Endothelial cell of umbilical vein (primary cell): ENCODE measurements at regions of chr9 and their contacts with region 1.

Region 1: DNA sequence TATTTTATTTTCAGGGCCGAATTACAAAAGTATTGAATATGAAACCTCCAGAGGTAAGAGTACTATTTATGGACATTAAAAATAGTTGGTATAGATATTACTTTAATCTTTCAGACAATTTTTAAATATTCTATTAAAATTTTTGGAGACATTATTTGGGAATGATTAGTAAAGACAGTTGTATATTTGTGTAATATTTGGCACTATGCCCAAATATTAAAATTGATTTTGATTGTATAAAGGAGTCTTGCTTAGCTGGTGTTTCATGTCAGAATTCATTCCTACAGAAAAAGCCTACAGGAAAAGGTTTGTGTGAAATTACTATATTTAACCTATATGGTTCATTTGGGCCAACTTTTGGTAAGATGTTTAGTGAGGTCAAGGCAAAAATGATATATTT is 5.5 kb downstream of the SMC2 start:
- DNase-seq: no peak
- H3K4me3 ChIP-seq: no peak overlapping the region
- H3K27ac ChIP-seq: no peak overlapping the region
- H3K4me1 ChIP-seq: peaks cover 7% of the 10 kb centered on the region
- H3K27me3 ChIP-seq: no peaks in the 10 kb centered on the region
- CTCF ChIP-seq: no peak
- POLR2A ChIP-seq: no peak

Region 2: GRCh38 chr9:104118916-104119315 is 19.3 kb after region 1 on chr9:
- CTCF ChIA-PET with region 1: interaction called, 15 read pairs
- POLR2A ChIA-PET with region 1: no interaction called
- dilution Hi-C with region 1: no loop called
- intact Hi-C with region 1: no loop called
- DNase-seq: no peak
- H3K4me3 ChIP-seq: no peak overlapping the region
- H3K27ac ChIP-seq: no peak overlapping the region
- H3K4me1 ChIP-seq: no peaks in the 10 kb centered on the region
- H3K27me3 ChIP-seq: no peaks in the 10 kb centered on the region
- CTCF ChIP-seq: no peak
- POLR2A ChIP-seq: no peak

Region 3: GRCh38 chr9:104227108-104227507 is 127.5 kb after region 1 on chr9:
- CTCF ChIA-PET with region 1: no interaction called
- POLR2A ChIA-PET with region 1: no interaction called
- dilution Hi-C with region 1: no loop called
- intact Hi-C with region 1: no loop called
- DNase-seq: no peak
- H3K4me3 ChIP-seq: no peak overlapping the region
- H3K27ac ChIP-seq: no peak overlapping the region
- H3K4me1 ChIP-seq: no peaks in the 10 kb centered on the region
- H3K27me3 ChIP-seq: no peaks in the 10 kb centered on the region
- CTCF ChIP-seq: no peak
- POLR2A ChIP-seq: no peak